ENCODE measurements at regions of chr1 and their contacts with region 1.

Region 1: GRCh38 chr1:235206533-235207208 is 45.6 kb upstream of the RBM34 start:
- DNase-seq: no peak
- H3K4me3 Mint-ChIP-seq: peak overlapping the region; percentile 17
- H3K27ac Mint-ChIP-seq: peak overlapping the region; percentile 87
- H3K4me1 Mint-ChIP-seq: peaks cover 23% of the 10 kb centered on the region
- H3K27me3 Mint-ChIP-seq: no peaks in the 10 kb centered on the region

Region 2: DNA sequence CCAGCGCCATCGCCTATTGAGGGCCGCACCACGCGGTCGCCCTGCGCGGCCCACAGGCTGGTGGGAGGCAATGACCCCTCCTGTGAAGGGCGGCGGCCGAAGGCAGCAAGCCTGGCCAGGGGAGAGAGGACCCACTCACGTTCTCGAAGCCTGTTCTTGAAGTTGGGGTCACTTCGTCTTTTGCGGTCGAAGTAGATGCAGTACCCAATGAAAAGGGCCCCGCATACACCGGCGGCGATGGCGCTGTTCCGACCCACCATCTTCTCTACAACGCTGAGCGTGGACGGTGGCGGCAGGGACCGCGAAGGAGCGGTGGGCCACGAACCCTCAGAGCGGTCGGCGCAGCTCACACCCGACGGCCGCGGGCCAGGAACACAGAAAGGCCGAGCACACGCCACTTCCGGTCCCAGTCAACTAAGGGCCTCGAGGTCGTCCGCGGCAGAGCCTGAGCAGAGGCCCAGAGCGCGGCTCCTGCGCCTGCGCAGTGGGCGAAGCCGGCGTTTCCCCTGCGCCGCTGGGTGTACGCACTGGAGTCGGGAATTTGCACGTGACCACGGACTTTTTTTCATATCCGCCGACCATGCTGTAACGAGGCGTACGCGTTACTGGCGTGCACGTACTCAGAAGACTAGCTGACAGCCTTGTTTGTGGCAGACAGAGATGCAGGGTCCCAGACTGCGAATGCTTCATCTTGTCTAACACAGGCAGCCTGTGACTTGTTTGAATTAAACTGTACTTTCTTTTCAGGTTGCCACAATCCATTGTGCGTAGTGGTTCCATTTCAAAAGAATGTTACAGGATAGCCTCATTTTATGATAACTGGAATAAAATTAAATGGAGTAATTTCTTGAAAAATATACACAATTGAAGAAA is 78.0 kb before region 1 on chr1 and contains the start of gene TOMM20:
- intact Hi-C with region 1: loop called (anchors 2 kb)
- DNase-seq: peak; percentile 94
- H3K4me3 Mint-ChIP-seq: peak within 1 kb of the TSS; percentile 99
- H3K27ac Mint-ChIP-seq: peak within 1 kb of the TSS; percentile 94
- H3K4me1 Mint-ChIP-seq: peaks cover 45% of the 10 kb centered on the region
- H3K27me3 Mint-ChIP-seq: no peaks in the 10 kb centered on the region
- total RNA-seq, gene TOMM20: 112 and 137 TPM in 2 replicates

Region 3: DNA sequence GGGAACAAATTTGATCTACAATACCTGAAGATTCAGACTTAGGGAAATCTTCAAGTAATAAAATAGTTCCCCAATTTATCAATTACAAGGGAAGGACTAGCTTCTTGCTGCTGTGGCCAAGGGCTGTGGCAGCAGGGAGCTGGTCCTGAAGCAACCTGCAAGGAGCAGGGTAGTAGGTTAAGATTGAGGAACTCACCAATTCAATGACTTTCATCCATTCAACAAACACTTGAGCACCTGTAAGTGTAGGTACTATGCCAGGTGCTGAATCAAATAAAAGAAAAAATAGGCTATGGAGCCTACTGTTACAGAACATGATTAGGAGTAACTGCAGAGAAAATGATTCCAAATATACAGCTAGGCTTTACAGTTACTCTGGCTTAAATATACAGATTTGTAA is 18.6 kb after region 1 on chr1:
- intact Hi-C with region 1: no loop called
- DNase-seq: no peak
- H3K4me3 Mint-ChIP-seq: no peak overlapping the region
- H3K27ac Mint-ChIP-seq: no peak overlapping the region
- H3K4me1 Mint-ChIP-seq: no peaks in the 10 kb centered on the region
- H3K27me3 Mint-ChIP-seq: no peaks in the 10 kb centered on the region

Region 4: GRCh38 chr1:235246022-235246991 is 39.6 kb after region 1 on chr1:
- intact Hi-C with region 1: loop called (anchors 2 kb)
- DNase-seq: no peak
- H3K4me3 Mint-ChIP-seq: peak overlapping the region; percentile 13
- H3K27ac Mint-ChIP-seq: peak overlapping the region; percentile 65
- H3K4me1 Mint-ChIP-seq: peaks cover 35% of the 10 kb centered on the region
- H3K27me3 Mint-ChIP-seq: no peaks in the 10 kb centered on the region

Region 5: GRCh38 chr1:235495551-235495950 is 288.9 kb after region 1 on chr1:
- intact Hi-C with region 1: loop called (anchors 5 kb)
- DNase-seq: no peak
- H3K4me3 Mint-ChIP-seq: no peak overlapping the region
- H3K27ac Mint-ChIP-seq: no peak overlapping the region
- H3K4me1 Mint-ChIP-seq: peaks cover 30% of the 10 kb centered on the region
- H3K27me3 Mint-ChIP-seq: no peaks in the 10 kb centered on the region

Region 6: GRCh38 chr1:235642011-235642942 is 435.6 kb after region 1 on chr1:
- intact Hi-C with region 1: loop called (anchors 2 kb)
- DNase-seq: peak; percentile 76
- H3K4me3 Mint-ChIP-seq: peak overlapping the region; percentile 67
- H3K27ac Mint-ChIP-seq: peak overlapping the region; percentile 92
- H3K4me1 Mint-ChIP-seq: peaks cover 71% of the 10 kb centered on the region
- H3K27me3 Mint-ChIP-seq: peaks cover 17% of the 10 kb centered on the region

Measured in activated T-helper 1 cell treated with anti-CD3 and anti-CD28 coated beads, Interleukin-12 subunit alpha, Interleukin-12 subunit beta, Interleukin-2, Interleukin-4 antibody, amounts not matched to agents 30 ng/mL and 10 ng/mL and 1 ng/mL, durations not matched to agents 14 hours and 24 hours and 36 hours (primary cell).